ENCODE measurements at regions of chr16 and their contacts with region 1.

Region 1: DNA sequence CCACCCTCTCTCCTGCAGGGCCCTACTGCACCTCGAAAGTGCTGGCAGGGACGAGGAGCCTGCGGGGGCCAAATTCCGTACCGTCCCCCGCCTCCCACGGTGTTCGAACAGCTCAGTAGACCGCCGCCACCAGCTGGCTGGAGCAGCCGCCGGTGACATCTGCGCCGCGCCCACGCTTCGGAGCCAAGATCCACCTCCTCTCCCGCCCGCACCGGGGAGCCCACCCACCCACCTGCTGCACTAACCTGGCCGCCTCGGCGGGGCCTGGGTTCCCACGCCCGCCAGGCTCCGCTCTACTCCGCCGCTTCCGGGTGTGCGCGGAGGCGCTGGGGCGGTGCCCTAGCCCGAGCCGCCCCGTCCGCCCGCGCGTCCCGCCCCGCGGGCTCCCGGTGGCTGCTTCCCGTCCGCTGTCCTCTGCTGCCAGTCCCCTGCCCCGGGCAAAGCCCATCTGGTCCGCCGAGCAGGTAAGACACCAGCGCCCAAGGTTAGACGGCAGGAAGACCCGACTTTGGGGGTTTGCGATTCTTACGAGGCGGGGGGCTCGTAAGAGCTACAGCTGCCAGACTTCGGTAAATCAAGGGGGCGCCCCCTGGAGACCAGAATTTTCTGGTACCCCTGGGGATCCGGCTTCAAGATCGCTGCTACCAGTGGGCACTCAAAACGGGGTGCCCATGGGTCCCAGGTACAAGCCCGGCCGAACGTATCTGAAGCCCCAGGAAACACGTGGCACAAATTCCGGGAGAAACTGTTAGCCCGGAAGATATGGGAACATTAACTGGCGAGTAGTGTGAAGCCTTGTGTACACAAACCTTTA is at the starts of genes FBXL8 and TRADD:
- DNase-seq: peak; percentile 82 to 88 (median 85)
- H3K4me3 ChIP-seq: peak within 1 kb of the TSS; percentile 95
- H3K4me3 Mint-ChIP-seq: peak within 1 kb of the TSS; percentile 92 to 96 (median 94)
- H3K27ac ChIP-seq: peak within 1 kb of the TSS; percentile 97
- H3K27ac Mint-ChIP-seq: peak within 1 kb of the TSS; percentile 94 to 100 (median 99)
- H3K4me1 ChIP-seq: peaks cover 79% of the 10 kb centered on the region
- H3K4me1 Mint-ChIP-seq: peaks cover 34 to 69% (median 50%) of the 10 kb centered on the region in 4 donors
- H3K27me3 ChIP-seq: peaks cover 7% of the 10 kb centered on the region
- H3K27me3 Mint-ChIP-seq: peaks cover 3% of the 10 kb centered on the region in 2 donors
- total RNA-seq, gene FBXL8: 69.9 to 76.2 TPM
- total RNA-seq, gene TRADD: 161 to 173 TPM

Region 2: GRCh38 chr16:66977341-66978113 is 182.3 kb before region 1 on chr16:
- CTCF ChIA-PET with region 1: interaction called, 50 read pairs
- POLR2A ChIA-PET with region 1: interaction called, 7 read pairs
- intact Hi-C with region 1: loop called (anchors 1 kb)
- DNase-seq: peak; percentile 80 to 83 (median 81)
- H3K4me3 ChIP-seq: no peak overlapping the region
- H3K4me3 Mint-ChIP-seq: peak overlapping the region in 1 of 8 donors; percentile 46
- H3K27ac ChIP-seq: no peak overlapping the region
- H3K27ac Mint-ChIP-seq: peak overlapping the region in 2 of 7 donors; percentile 2 to 42
- H3K4me1 ChIP-seq: peaks cover 14% of the 10 kb centered on the region
- H3K4me1 Mint-ChIP-seq: peaks cover 11 to 23% (median 17%) of the 10 kb centered on the region in 4 donors
- H3K27me3 ChIP-seq: no peaks in the 10 kb centered on the region
- H3K27me3 Mint-ChIP-seq: peaks cover 0 to 3% of the 10 kb centered on the region in 2 donors

Region 3: DNA sequence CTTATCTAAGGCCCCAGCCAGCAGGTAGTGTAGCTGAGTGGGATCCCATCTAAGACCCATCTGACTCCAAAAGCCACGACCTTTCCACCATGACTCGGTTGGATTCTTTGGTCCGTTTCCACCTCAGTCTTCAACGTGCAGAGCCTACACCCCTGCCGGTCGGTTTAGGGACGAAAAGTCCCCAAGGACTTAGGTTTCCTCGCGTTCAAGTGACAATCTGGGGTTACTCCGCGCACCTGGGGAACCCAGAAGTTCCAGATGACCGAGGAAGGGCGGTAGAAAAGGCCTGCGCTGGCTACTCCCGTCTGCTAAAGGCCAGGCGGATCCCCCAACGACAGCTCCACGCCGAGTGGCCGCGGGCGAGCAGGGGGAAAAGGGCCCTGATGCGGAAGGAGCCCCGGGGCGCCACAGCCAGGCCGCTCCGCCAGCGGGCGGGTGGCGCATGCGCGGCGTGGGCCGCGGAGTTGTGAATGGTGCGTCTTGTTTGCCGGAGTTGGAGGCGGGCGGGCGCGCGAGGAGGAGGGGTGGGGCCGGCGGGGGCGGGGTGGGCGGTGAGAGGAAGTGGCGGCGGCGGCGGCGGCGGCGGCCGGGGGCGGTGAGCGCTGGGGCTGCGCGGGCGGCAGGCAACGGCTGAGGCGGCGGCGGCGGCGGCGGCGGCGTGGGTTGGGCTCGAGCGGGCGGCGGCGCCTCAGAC is 131.1 kb before region 1 on chr16 and contains the start of gene CBFB:
- CTCF ChIA-PET with region 1: interaction called, 9 read pairs
- POLR2A ChIA-PET with region 1: interaction called, 60 read pairs
- intact Hi-C with region 1: loop called (anchors 1 kb)
- DNase-seq: peak; percentile 94 to 97 (median 96)
- H3K4me3 ChIP-seq: peak within 1 kb of the TSS; percentile 76 to 84
- H3K4me3 Mint-ChIP-seq: peak within 1 kb of the TSS; percentile 90 to 93 (median 92)
- H3K27ac ChIP-seq: peak within 1 kb of the TSS; percentile 88
- H3K27ac Mint-ChIP-seq: peak within 1 kb of the TSS; percentile 94 to 97 (median 96)
- H3K4me1 ChIP-seq: peaks cover 43% of the 10 kb centered on the region
- H3K4me1 Mint-ChIP-seq: peaks cover 20 to 50% (median 37%) of the 10 kb centered on the region in 4 donors
- H3K27me3 ChIP-seq: no peaks in the 10 kb centered on the region
- H3K27me3 Mint-ChIP-seq: no peaks in the 10 kb centered on the region
- total RNA-seq, gene CBFB: 112 TPM

Region 4: DNA sequence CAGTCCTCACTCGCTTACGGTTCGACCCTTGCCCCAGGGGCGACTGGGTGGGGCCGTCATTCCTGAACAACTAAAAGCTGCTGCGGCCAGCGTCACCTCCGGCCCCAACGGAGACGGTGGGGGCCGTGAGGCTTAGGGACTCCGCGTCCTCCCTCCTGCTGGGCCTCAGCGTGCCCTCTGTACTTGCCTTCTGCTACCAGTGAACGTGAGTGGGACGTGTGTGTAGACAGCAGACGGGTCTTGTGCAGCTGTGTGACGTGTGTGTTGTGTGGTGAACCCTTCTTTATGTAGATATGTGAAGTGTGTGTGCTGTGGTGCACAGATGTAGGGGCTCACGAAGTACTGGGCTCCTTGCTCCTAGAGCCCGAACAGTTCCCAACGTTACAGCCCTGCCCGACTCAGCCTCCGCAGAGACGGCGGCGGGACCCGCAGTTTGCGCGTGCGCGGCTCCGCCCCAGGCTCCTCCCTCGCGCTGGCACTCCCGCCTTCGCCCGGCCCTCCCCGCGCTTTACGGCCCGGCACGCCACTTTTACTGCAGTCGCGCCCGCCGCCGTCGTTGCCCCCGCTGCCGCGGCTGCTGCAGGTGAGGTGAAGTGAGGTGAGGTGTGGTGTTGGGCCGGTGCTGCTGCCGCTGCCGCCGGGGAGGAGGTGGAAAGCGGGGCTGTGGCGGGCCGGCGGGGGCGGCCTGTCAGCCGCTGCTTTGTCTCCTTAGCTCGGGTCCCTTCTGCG is 50.2 kb before region 1 on chr16 and contains the start of gene PHAF1:
- CTCF ChIA-PET with region 1: interaction called, 41 read pairs
- POLR2A ChIA-PET with region 1: interaction called, 14 read pairs
- intact Hi-C with region 1: loop called (anchors 2 kb)
- DNase-seq: peak; percentile 93 to 98 (median 96)
- H3K4me3 ChIP-seq: peak within 1 kb of the TSS; percentile 85 to 96
- H3K4me3 Mint-ChIP-seq: peak within 1 kb of the TSS; percentile 92 to 97 (median 94)
- H3K27ac ChIP-seq: peak within 1 kb of the TSS; percentile 66
- H3K27ac Mint-ChIP-seq: peak within 1 kb of the TSS; percentile 84 to 95 (median 91)
- H3K4me1 ChIP-seq: peaks cover 30% of the 10 kb centered on the region
- H3K4me1 Mint-ChIP-seq: peaks cover 21 to 41% (median 30%) of the 10 kb centered on the region in 4 donors
- H3K27me3 ChIP-seq: no peaks in the 10 kb centered on the region
- H3K27me3 Mint-ChIP-seq: no peaks in the 10 kb centered on the region
- total RNA-seq, gene PHAF1: 22.2 to 22.7 TPM

Region 5: GRCh38 chr16:67173808-67174705 is 14.3 kb after region 1 on chr16:
- CTCF ChIA-PET with region 1: interaction called, 71 read pairs
- POLR2A ChIA-PET with region 1: interaction called, 320 read pairs
- intact Hi-C with region 1: loop called (anchors 1 kb)
- DNase-seq: peak; percentile 61 to 78 (median 64)
- H3K4me3 ChIP-seq: peak overlapping the region; percentile 29 to 68
- H3K4me3 Mint-ChIP-seq: peak overlapping the region; percentile 81 to 95 (median 88)
- H3K27ac ChIP-seq: peak overlapping the region; percentile 20
- H3K27ac Mint-ChIP-seq: peak overlapping the region; percentile 61 to 96 (median 78)
- H3K4me1 ChIP-seq: peaks cover 49% of the 10 kb centered on the region
- H3K4me1 Mint-ChIP-seq: peaks cover 26 to 66% (median 37%) of the 10 kb centered on the region in 4 donors
- H3K27me3 ChIP-seq: peaks cover 14% of the 10 kb centered on the region
- H3K27me3 Mint-ChIP-seq: peaks cover 5 to 18% of the 10 kb centered on the region in 2 donors

Region 6: DNA sequence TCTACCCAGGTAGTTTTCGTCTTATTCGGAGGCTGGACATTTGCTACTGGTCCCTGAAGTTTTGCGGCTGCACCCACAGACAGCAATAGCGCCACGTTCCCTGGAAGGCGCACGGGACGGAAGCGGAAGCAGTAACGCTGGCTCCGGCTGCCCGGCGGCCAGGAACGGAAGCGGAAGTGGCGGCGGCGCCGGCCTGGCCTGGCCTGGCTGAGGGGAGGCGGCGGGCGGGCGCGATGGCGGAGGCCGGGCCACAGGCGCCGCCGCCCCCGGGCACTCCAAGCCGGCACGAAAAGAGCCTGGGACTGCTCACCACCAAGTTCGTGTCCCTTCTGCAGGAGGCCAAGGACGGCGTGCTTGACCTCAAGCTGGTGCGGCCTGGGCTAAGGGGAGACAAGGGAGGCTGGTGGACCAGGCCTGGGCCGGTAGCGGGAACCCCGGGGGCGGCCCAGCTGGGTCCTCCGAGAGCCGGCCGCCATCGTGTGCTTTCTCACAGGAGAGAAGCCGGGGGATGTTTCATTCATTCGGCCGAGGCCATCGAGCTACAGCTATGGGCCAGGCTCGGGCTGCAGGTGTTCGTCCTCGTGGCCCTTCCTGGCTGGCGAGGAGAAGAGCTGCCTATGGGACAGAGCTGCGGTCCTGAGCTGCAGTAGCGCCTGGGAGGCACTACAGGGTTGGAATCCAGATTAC is 32.3 kb after region 1 on chr16 and contains the start of gene E2F4:
- CTCF ChIA-PET with region 1: interaction called, 4 read pairs
- POLR2A ChIA-PET with region 1: interaction called, 12 read pairs
- intact Hi-C with region 1: no loop called
- DNase-seq: peak; percentile 80 to 85 (median 83)
- H3K4me3 ChIP-seq: peak within 1 kb of the TSS; percentile 84 to 87
- H3K4me3 Mint-ChIP-seq: peak within 1 kb of the TSS; percentile 86 to 96 (median 90)
- H3K27ac ChIP-seq: peak within 1 kb of the TSS; percentile 80
- H3K27ac Mint-ChIP-seq: peak within 1 kb of the TSS; percentile 84 to 95 (median 91)
- H3K4me1 ChIP-seq: peaks cover 30% of the 10 kb centered on the region
- H3K4me1 Mint-ChIP-seq: peaks cover 24 to 50% (median 41%) of the 10 kb centered on the region in 4 donors
- H3K27me3 ChIP-seq: no peaks in the 10 kb centered on the region
- H3K27me3 Mint-ChIP-seq: no peaks in the 10 kb centered on the region
- total RNA-seq, gene E2F4: 87.3 to 91.3 TPM

Region 7: DNA sequence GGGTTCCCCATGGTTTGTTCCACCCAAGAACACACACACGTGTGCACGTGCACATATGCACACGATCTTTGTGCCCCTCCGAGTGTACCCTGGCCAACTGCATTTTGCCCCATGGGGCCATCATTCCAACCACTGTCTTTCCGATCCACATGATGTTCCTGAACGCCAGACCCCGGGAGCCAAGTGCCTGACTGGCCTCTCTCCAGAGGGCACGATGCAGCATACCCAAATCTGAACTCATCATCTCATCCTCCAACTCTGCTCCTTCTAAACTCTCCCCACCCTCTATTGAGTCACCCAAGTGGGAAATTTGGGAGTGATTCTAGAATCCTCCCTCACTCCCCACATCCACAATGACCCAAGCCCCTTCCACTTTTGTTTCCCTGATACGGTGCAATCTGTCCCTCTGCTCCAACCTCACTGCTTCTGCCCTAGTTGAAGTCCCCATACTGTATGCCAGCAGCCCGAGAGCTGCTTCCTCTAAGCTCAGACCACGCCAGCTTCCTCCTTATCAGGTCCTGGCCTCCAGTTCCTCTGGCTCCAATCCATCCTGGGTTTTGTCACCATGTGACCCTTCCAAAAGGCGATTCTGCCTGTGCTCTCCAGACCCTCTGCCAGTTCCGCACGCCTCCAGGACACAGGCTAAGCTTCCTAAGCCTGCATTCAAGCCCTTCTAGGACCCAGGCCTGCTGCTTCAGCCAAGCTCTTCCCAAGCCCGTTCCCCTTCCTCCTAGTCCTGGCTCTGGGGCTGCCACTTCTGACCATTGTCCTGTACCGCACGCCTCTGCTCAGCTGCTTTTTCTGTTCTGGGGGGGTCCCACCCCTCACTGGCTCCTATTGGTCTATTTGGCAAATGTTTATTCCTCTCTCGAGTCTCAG is 57.1 kb after region 1 on chr16:
- CTCF ChIA-PET with region 1: no interaction called
- POLR2A ChIA-PET with region 1: no interaction called
- intact Hi-C with region 1: no loop called
- DNase-seq: no peak
- H3K4me3 ChIP-seq: no peak overlapping the region
- H3K4me3 Mint-ChIP-seq: no peak overlapping the region
- H3K27ac ChIP-seq: no peak overlapping the region
- H3K27ac Mint-ChIP-seq: peak overlapping the region in 3 of 7 donors; percentile 24 to 71 (median 50)
- H3K4me1 ChIP-seq: no peaks in the 10 kb centered on the region
- H3K4me1 Mint-ChIP-seq: peaks cover 0 to 4% (median 2%) of the 10 kb centered on the region in 4 donors
- H3K27me3 ChIP-seq: no peaks in the 10 kb centered on the region
- H3K27me3 Mint-ChIP-seq: no peaks in the 10 kb centered on the region

Region 8: GRCh38 chr16:67246934-67247697 is 87.3 kb after region 1 on chr16 and contains the start of gene FHOD1:
- CTCF ChIA-PET with region 1: interaction called, 3 read pairs
- POLR2A ChIA-PET with region 1: interaction called, 22 read pairs
- intact Hi-C with region 1: loop called (anchors 5 kb)
- DNase-seq: peak; percentile 92 to 96 (median 93)
- H3K4me3 ChIP-seq: peak within 1 kb of the TSS; percentile 73 to 85
- H3K4me3 Mint-ChIP-seq: peak within 1 kb of the TSS; percentile 84 to 95 (median 91)
- H3K27ac ChIP-seq: peak within 1 kb of the TSS; percentile 82
- H3K27ac Mint-ChIP-seq: peak within 1 kb of the TSS; percentile 84 to 100 (median 95)
- H3K4me1 ChIP-seq: peaks cover 57% of the 10 kb centered on the region
- H3K4me1 Mint-ChIP-seq: peaks cover 26 to 61% (median 44%) of the 10 kb centered on the region in 4 donors
- H3K27me3 ChIP-seq: no peaks in the 10 kb centered on the region
- H3K27me3 Mint-ChIP-seq: peaks cover 1 to 3% of the 10 kb centered on the region in 2 donors
- total RNA-seq, gene FHOD1: 56.0 to 63.3 TPM